Head of caudate nucleus (tissue), 42 donors: ENCODE measurements at regions of chr9 and their contacts with region 1.

Region 1: DNA sequence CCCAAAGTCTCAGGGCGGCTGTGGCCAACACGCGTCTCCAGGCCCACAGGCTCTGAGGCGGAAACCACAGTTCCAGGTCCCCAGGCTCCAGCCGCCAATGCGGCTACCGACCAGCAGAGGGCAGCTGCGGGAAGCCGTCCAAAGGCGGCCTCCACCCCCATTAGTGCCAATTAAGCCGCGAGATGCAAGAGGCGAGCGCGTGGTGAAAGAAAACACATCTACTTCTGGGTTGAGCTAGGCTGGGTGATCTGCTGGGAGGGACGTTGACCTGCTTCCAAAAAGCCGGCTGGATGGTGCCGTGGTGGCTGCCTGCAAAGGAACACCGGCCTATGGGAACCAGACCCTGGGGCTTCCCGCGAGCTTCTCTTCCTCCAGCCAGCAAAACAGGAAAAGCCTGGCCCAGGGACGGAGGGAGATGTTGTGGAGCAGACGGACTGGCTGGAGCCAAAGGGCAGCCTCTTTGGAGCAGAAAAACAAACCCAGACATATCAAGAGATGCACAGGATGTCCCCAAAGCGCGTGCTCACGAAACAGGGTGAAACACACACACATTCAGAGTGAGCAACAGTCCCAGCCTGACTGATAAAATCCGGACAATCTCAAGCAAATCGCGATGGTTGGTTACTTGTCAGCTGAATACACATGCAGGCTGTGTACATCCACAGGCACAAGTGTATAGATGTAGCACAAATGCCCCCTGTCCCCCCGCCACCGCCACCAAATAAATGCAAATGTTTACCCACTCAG is 187.1 kb upstream of the BRINP1 start:
- DNase-seq: peak; percentile 49 to 90 (median 77)

Region 2: DNA sequence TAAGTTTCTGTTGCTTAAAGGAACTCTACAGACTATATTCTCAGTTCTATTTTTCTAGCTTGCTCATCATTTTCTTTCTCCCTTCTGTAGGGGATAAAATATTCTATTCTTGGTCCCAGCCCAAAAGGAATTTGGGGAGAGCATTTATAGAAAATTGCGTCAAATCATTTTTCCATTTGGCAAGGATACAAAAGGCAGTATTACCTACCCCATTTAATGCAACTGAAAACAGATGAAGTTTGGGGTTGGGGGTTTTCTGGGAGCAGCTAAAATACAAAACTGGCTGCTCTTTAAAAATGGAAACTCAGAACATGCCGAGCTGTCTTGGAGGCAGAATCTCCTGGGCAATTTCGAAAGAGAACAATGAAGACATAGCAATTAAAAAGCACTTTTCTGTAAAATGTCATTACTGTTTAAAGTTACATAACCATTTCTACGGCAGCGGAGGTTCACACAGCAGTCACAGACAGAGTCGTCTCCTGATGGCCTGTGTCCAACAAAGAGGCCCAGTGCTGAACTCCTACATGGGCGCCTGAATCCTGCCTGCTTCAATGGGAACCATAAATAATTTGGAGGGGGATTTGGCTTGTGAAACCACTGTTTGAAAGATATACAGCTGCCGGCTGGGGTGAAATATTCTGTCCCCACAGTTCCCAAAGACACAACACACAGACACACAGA is 339.5 kb before region 1 on chr9:
- intact Hi-C with region 1: no loop called
- DNase-seq: peak in 33 of 42 donors; percentile 2 to 71 (median 26)

Region 3: GRCh38 chr9:119435066-119435465 is 121.2 kb before region 1 on chr9:
- intact Hi-C with region 1: no loop called
- DNase-seq: no peak

Region 4: GRCh38 chr9:120348951-120349429 is 792.7 kb after region 1 on chr9:
- intact Hi-C with region 1: loop called (anchors 10 kb)
- DNase-seq: peak in 40 of 42 donors; percentile 17 to 76 (median 44)